A673 (cell line): ENCODE measurements at regions of chr3 and their contacts with region 1.

Region 1: DNA sequence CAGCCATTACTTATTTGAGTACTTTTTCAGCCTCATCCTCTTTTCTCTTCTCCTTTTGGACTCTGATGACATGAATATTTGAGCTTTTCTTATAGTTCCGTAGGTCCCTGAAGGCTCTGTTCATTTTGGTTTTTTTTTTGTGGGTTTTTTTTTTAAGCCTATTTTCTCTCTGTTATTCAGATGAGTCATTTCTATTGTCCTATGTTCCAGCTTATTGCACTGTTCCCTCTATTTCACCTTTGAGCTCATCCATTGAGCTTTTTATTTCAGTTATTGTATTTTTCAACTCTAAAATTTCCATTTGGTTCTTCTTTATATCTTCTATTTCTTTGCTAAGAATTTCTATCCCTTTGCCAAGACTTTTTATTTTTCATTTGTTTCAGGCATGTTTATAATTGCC is 7.2 kb upstream of the MGLL start:
- DNase-seq: no peak
- H3K4me3 ChIP-seq: no peak overlapping the region
- H3K27ac ChIP-seq: no peak overlapping the region
- H3K4me1 ChIP-seq: no peaks in the 10 kb centered on the region
- H3K27me3 ChIP-seq: no peaks in the 10 kb centered on the region
- CTCF ChIP-seq: no peak

Region 2: GRCh38 chr3:127089486-127090145 is 739.9 kb before region 1 on chr3:
- CTCF ChIA-PET with region 1: no interaction called
- POLR2A ChIA-PET with region 1: interaction called, 12 read pairs
- intact Hi-C with region 1: no loop called
- DNase-seq: no peak
- H3K4me3 ChIP-seq: no peak overlapping the region
- H3K27ac ChIP-seq: no peak overlapping the region
- H3K4me1 ChIP-seq: no peaks in the 10 kb centered on the region
- H3K27me3 ChIP-seq: no peaks in the 10 kb centered on the region
- CTCF ChIP-seq: no peak